Uterus (tissue), 4 donors: ENCODE measurements at regions of chr18 and their contacts with region 1.

Region 1: DNA sequence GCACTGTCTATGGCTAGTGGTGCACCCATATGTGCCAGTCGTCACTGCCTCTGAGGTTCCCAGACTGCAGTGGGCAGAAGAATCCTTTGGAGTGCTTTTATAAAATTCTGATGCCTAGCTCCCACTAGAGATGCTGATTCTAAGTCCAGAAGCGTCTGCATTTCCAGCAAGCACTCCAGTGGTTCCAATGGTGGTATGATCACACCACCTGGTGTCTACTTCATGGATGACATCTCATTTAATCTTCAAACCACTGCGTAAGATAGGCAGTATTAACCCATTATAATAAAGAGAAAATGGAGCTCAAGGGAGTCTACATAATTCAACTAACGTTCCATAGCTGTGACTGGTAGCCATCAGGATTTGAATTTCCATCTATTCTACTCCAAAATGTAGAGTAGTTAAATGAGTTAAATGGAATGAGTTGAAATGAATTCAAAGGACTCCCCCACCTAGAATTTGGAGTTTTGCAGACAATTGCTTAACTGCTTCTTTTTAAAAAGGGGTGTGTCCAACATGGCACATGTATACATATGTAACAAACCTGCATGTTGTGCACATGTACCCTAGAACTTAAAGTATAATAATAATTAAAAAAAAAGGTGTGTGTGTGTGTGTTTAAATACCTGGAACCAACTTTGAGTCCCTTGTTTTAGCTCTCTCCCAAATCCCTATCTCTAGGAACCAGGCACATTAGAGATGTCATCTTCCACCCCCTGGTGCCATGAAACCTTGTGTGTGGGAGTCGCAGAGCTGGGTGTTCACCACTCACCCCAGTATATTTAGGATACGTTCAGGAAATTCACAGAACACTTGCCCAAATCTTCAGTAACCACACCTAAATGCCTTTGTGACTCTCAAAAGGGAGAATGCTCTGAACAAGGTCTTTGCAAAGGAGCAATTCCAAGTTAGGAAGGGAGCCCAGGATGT is 14.1 kb downstream of the LAMA3 start:
- DNase-seq: peak in 1 of 2 donors; percentile 46
- H3K4me3 ChIP-seq: no peak overlapping the region
- H3K27ac ChIP-seq: peak overlapping the region; percentile 32 to 65
- H3K4me1 ChIP-seq: peaks cover 0 to 5% of the 10 kb centered on the region in 2 donors
- H3K27me3 ChIP-seq: no peaks in the 10 kb centered on the region
- CTCF ChIP-seq: peak; percentile 59 to 87 (median 73)
- POLR2A ChIP-seq: no peak

Region 2: GRCh38 chr18:23619388-23619881 is 83.9 kb before region 1 on chr18:
- intact Hi-C with region 1: loop called (anchors 2 kb)
- DNase-seq: peak; percentile 34 to 56
- H3K4me3 ChIP-seq: peak overlapping the region; percentile 34 to 42
- H3K27ac ChIP-seq: peak overlapping the region; percentile 78 to 91
- H3K4me1 ChIP-seq: peaks cover 0 to 7% of the 10 kb centered on the region in 2 donors
- H3K27me3 ChIP-seq: no peaks in the 10 kb centered on the region
- CTCF ChIP-seq: peak in 2 of 4 experiments; percentile 21 to 26
- POLR2A ChIP-seq: no peak